ENCODE measurements at regions of chr3 and their contacts with region 1.

Region 1: GRCh38 chr3:158644345-158644908 is at the start of gene GFM1:
- DNase-seq: peak; percentile 91
- CTCF ChIP-seq: peak; percentile 98

Region 2: GRCh38 chr3:158617982-158618875 is 26.2 kb before region 1 on chr3:
- CTCF ChIA-PET with region 1: interaction called, 10 read pairs
- POLR2A ChIA-PET with region 1: no interaction called
- DNase-seq: no peak
- CTCF ChIP-seq: no peak

Measured in GM10248 (cell line).